CD8-positive, alpha-beta memory T cell (primary cell): ENCODE measurements at regions of chr1 and their contacts with region 1.

Region 1: GRCh38 chr1:10924030-10924429 is 88.4 kb upstream of the TARDBP start:
- DNase-seq: no peak
- H3K4me3 ChIP-seq: no peak overlapping the region
- H3K4me3 Mint-ChIP-seq: no peak overlapping the region
- H3K27ac ChIP-seq: no peak overlapping the region
- H3K27ac Mint-ChIP-seq: no peak overlapping the region
- H3K4me1 ChIP-seq: no peaks in the 10 kb centered on the region
- H3K4me1 Mint-ChIP-seq: no peaks in the 10 kb centered on the region
- H3K27me3 ChIP-seq: peaks cover 5% of the 10 kb centered on the region
- H3K27me3 Mint-ChIP-seq: peaks cover 5 to 8% of the 10 kb centered on the region in 2 donors

Region 2: GRCh38 chr1:9518454-9518998 is 1405.5 kb before region 1 on chr1:
- CTCF ChIA-PET with region 1: no interaction called
- POLR2A ChIA-PET with region 1: interaction called, 11 read pairs
- DNase-seq: no peak
- H3K4me3 ChIP-seq: no peak overlapping the region
- H3K4me3 Mint-ChIP-seq: no peak overlapping the region
- H3K27ac ChIP-seq: no peak overlapping the region
- H3K27ac Mint-ChIP-seq: no peak overlapping the region
- H3K4me1 ChIP-seq: no peaks in the 10 kb centered on the region
- H3K4me1 Mint-ChIP-seq: no peaks in the 10 kb centered on the region
- H3K27me3 ChIP-seq: no peaks in the 10 kb centered on the region
- H3K27me3 Mint-ChIP-seq: peaks cover 4 to 6% of the 10 kb centered on the region in 2 donors

Region 3: DNA sequence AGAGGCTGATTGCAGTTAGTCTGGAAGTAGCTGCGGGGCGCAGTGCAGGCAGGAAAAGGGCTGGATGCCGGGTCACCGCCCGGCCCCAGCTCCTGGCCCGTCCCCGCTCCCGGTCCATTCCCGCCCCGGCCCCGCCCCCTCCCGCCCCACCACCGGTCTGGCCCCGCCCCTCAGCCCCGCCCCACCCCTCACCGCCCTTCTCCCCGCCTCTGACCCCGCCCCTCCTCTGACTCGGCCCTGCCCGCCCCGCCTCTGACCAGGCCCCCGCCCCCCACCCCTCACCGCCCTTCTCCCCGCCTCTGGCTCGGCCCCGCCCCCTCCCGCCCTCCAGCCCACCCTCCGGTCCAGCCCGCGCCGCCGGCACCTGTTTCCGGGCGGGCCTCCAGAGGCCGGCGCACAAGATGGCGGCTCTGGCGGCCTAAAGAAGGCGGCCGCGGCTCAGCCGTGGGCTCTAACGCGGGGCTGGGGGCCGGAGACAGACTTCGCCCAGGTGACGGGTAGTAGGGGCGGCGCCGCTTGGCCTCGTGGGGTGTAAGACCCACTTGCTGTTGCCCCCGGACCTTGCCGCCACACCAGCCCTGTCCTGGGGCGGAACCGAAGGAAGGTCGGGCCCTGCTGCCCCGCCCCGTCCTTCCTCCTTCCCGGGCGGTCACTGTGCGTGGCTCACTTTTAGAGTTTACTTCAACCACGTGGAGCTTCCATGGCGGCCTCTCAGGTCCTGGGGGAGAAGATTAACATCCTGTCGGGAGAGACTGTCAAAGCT is 349.0 kb after region 1 on chr1 and contains the start of gene UBIAD1:
- CTCF ChIA-PET with region 1: no interaction called
- POLR2A ChIA-PET with region 1: no interaction called
- DNase-seq: peak; percentile 77 to 89 (median 80)
- H3K4me3 ChIP-seq: peak within 1 kb of the TSS; percentile 96
- H3K4me3 Mint-ChIP-seq: peak within 1 kb of the TSS; percentile 93 to 100 (median 94)
- H3K27ac ChIP-seq: peak within 1 kb of the TSS; percentile 90
- H3K27ac Mint-ChIP-seq: peak within 1 kb of the TSS; percentile 76 to 99 (median 94)
- H3K4me1 ChIP-seq: peaks cover 25% of the 10 kb centered on the region
- H3K4me1 Mint-ChIP-seq: peaks cover 27 to 41% (median 40%) of the 10 kb centered on the region in 3 donors
- H3K27me3 ChIP-seq: no peaks in the 10 kb centered on the region
- H3K27me3 Mint-ChIP-seq: peaks cover 0 to 3% of the 10 kb centered on the region in 2 donors
- total RNA-seq, gene UBIAD1: 35.7 to 41.8 TPM